RWPE1 (cell line): ENCODE measurements at regions of chr16 and their contacts with region 1.

Region 1: DNA sequence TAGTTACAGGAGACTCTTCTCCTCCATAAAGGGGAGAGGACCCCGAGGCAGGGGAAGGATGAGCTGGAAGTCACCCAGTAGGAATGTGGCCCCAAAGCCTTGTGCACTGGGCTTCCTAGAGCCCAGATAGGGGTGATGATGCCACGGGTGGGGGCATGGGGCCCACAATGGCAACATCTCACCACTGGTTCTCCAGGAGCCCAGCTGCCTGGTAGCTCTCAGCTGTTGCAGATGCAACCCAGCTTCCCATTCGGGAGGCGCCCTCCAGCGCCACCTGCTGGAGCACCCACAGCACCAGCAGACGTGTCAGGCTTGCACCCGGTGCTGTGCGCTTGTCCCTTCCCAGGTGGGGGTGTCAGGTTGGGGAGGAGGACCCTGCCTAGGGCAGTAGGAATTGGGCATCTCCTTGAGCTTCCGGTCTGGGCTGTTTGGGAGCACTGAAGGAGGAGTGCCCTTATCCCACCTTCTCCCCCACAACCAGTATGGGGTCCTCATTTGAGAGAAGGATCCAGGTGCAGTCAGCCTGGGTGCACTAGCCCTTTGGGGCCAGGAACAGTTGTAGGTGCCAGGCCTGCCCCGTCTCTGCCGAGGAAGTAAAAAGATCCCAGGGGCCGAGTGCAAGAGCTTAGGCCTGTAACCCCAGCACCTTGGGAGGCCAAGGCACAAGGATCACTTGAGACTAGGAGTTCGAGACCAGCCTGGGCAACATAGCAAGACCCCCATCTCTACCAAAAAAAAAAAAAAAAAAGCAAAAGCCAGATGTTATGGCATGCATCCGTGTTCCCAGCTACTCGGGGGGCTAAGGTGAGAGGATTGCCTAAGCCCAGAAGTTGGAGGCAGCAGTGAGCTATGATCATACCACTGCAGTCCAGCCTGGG is 14.4 kb downstream of the CDIPT start:
- DNase-seq: peak; percentile 44
- H3K27ac ChIP-seq: peak overlapping the region; percentile 20; the same call in 1 of the 2 replicates
- CTCF ChIP-seq: peak; percentile 78

Region 2: DNA sequence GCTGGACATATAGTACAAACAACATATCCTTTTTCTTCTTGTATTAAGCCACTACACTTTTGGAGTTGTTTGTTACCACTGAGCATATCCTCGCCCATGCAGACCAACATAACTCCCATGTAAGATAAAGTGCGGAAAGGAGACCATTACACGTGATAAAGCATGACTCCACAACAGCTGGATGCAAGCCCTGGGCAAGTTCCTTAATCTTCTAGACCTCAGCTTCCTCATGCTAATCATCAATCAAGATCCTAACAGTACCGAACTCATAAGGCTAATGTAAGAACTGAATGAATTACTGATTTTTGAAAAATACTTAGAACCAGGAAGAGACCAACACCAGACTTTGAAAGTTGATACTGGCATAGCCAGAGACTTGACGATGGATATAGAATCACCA is 1738.2 kb before region 1 on chr16:
- CTCF ChIA-PET with region 1: no interaction called
- POLR2A ChIA-PET with region 1: no interaction called
- DNase-seq: no peak
- H3K27ac ChIP-seq: no peak overlapping the region
- CTCF ChIP-seq: no peak

Region 3: DNA sequence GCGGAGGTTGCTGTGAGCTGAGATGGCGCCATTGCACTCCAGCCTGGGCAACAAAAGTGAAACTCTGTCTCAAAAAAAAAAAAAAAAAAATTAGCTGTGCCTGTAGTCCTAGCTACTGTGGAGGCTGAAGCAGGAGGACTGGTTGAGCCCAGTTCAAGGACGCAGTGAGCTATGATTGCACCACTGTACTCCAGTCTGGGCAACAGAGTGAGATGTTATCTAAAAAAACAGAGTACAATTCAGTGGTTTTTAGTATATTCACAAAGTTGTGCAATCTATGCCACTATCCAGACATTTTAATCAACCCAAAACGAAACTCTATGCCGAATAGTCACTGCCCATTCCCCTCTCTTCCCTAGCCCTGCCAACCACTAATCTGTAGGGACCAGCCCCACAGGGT is 128.0 kb before region 1 on chr16:
- CTCF ChIA-PET with region 1: no interaction called
- POLR2A ChIA-PET with region 1: no interaction called
- DNase-seq: no peak
- H3K27ac ChIP-seq: no peak overlapping the region
- CTCF ChIP-seq: no peak

Region 4: GRCh38 chr16:29862884-29863668 is 14.4 kb after region 1 on chr16 and contains the start of gene CDIPT:
- CTCF ChIA-PET with region 1: interaction called, 9 read pairs
- POLR2A ChIA-PET with region 1: interaction called, 12 read pairs
- DNase-seq: peak; percentile 93
- H3K27ac ChIP-seq: peak within 1 kb of the TSS; percentile 85
- CTCF ChIP-seq: peak; percentile 82